Heart right ventricle (tissue), 16 donors: ENCODE measurements at regions of chr7 and their contacts with region 1.

Region 1: GRCh38 chr7:155804897-155805825 is 7.1 kb downstream of the SHH start:
- DNase-seq: peak in 1 of 2 donors; percentile 32
- ATAC-seq: peak; percentile 51 to 77 (median 74)
- H3K4me3 ChIP-seq: peak overlapping the region; percentile 11 to 51 (median 36)
- H3K27ac ChIP-seq: no peak overlapping the region
- H3K4me1 ChIP-seq: peaks cover 10 to 62% (median 51%) of the 10 kb centered on the region in 9 donors
- H3K27me3 ChIP-seq: peaks cover 56 to 100% (median 100%) of the 10 kb centered on the region in 7 donors
- CTCF ChIP-seq: peak in 7 of 9 donors; percentile 36 to 66 (median 44)

Region 2: GRCh38 chr7:154620141-154620755 is 1184.9 kb before region 1 on chr7:
- intact Hi-C with region 1: no loop called
- DNase-seq: no peak
- ATAC-seq: no peak
- H3K4me3 ChIP-seq: no peak overlapping the region
- H3K27ac ChIP-seq: no peak overlapping the region
- H3K4me1 ChIP-seq: no peaks in the 10 kb centered on the region
- H3K27me3 ChIP-seq: peaks cover 0 to 4% (median 0%) of the 10 kb centered on the region in 7 donors
- CTCF ChIP-seq: no peak

Region 3: GRCh38 chr7:155769701-155770100 is 35.5 kb before region 1 on chr7:
- intact Hi-C with region 1: no loop called
- DNase-seq: no peak
- ATAC-seq: peak in 3 of 8 donors; percentile 45 to 66 (median 57)
- H3K4me3 ChIP-seq: no peak overlapping the region
- H3K27ac ChIP-seq: peak overlapping the region in 4 of 10 donors; percentile 4 to 77 (median 28)
- H3K4me1 ChIP-seq: peaks cover 0 to 17% (median 1%) of the 10 kb centered on the region in 9 donors
- H3K27me3 ChIP-seq: no peaks in the 10 kb centered on the region
- CTCF ChIP-seq: no peak

Region 4: GRCh38 chr7:156402255-156402654 is 597.1 kb after region 1 on chr7:
- intact Hi-C with region 1: no loop called
- DNase-seq: no peak
- ATAC-seq: no peak
- H3K4me3 ChIP-seq: no peak overlapping the region
- H3K27ac ChIP-seq: no peak overlapping the region
- H3K4me1 ChIP-seq: no peaks in the 10 kb centered on the region
- H3K27me3 ChIP-seq: peaks cover 0 to 12% (median 1%) of the 10 kb centered on the region in 7 donors
- CTCF ChIP-seq: no peak

Region 5: GRCh38 chr7:156816943-156817572 is 1011.9 kb after region 1 on chr7:
- intact Hi-C with region 1: loop called in 1 of 10 experiments (anchors 10 kb)
- DNase-seq: no peak
- ATAC-seq: no peak
- H3K4me3 ChIP-seq: no peak overlapping the region
- H3K27ac ChIP-seq: no peak overlapping the region
- H3K4me1 ChIP-seq: no peaks in the 10 kb centered on the region
- H3K27me3 ChIP-seq: no peaks in the 10 kb centered on the region
- CTCF ChIP-seq: peak in 7 of 9 donors; percentile 19 to 56 (median 46)